K562 (cell line): ENCODE measurements at regions of chr5 and their contacts with region 1.

Region 1: GRCh38 chr5:132456296-132457001 is 34.1 kb downstream of the IRF1 start:
- DNase-seq: no peak
- ATAC-seq: no peak
- H3K4me3 ChIP-seq: no peak overlapping the region
- H3K27ac ChIP-seq: no peak overlapping the region
- H3K4me1 ChIP-seq: peaks cover 16 to 42% of the 10 kb centered on the region in 2 experiments
- H3K27me3 ChIP-seq: no peaks in the 10 kb centered on the region
- CTCF ChIP-seq: no peak
- EP300 ChIP-seq: no peak
- POLR2A ChIP-seq: no peak
- RAD21 ChIP-seq: no peak

Region 2: DNA sequence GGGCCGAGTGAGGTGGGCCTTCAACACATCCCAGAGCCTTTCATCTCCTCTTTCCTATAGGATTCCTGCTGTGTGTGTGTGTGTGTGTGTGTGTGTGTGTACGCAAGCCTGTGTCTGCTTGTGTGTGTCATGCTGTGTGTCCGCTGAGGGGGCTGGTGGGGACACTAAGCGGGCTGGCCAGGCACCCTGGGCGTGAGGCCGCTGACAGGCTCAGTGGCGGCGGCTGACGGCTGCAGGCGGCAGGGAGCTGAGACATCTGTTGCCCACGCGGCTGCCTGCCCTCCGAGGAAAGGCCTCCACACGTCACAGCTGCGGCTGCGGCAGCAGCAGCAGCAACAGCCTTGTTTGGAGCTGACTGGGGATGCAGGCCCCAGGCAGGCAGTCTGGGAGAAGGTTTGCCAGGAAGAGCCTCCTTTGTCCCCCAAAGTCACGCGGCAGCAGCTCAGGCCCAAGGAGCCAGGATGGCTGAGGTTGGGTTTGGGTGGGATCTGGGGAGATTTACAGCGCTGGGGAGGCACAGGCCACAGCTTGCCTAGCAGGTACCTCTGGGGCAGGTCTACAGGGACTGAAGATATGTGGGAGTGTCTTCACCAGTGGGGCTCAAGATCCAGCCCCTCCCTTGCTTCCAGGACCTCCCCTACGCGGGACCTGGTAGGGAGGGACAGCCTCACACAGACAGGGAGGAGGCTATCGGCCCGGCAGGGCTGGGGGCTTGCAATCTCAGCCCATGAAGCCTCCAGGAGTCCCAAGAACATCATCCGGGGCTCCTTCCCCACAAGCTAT is 197.2 kb before region 1 on chr5:
- CTCF ChIA-PET with region 1: no interaction called
- POLR2A ChIA-PET with region 1: no interaction called
- in situ Hi-C with region 1: no loop called
- intact Hi-C with region 1: no loop called
- DNase-seq: peak; percentile 54 to 69 (median 58)
- ATAC-seq: peak; percentile 58
- H3K4me3 ChIP-seq: peak overlapping the region; percentile 63
- H3K27ac ChIP-seq: peak overlapping the region; percentile 74; the same call in 2 of the 3 replicates
- H3K4me1 ChIP-seq: peaks cover 41 to 63% of the 10 kb centered on the region in 2 experiments
- H3K27me3 ChIP-seq: no peaks in the 10 kb centered on the region
- CTCF ChIP-seq: no peak
- EP300 ChIP-seq: no peak
- POLR2A ChIP-seq: no peak
- RAD21 ChIP-seq: no peak

Region 3: DNA sequence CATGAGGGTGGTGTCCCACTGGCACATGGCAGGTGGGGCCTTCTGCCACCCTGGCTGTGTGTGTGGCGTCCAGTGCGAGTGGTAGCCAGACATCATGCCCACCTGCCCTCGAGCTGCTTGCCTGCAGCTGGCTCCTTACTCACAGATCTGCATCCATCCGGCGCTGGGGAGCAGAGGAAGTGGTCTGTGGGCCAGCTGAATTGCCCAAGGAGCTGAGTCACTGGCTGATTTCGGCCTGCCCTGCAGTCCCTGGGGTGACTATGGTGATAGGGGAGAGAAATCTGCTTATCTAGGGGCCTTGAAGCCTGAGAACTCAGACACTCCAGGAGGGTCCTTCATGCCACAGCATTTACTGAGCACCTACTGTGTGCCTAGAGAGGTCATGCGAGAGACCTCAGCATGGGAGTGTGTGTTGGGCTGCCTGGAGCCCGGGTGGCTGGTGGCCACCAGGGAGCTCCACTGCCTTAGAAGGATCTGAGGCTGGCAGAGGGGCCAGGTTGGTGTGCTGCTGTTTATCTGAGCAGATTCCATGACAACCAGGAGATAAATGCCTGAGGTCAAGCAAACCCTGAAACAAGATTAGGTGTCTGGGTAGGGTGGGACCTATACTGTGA is 29.8 kb before region 1 on chr5:
- CTCF ChIA-PET with region 1: interaction called, 3 read pairs
- POLR2A ChIA-PET with region 1: interaction called, 16 read pairs
- in situ Hi-C with region 1: loop called (anchors 5 kb)
- intact Hi-C with region 1: loop called (anchors 2 kb)
- DNase-seq: peak; percentile 75 to 91 (median 84)
- ATAC-seq: peak; percentile 81
- H3K4me3 ChIP-seq: no peak overlapping the region
- H3K27ac ChIP-seq: peak overlapping the region; percentile 76
- H3K4me1 ChIP-seq: peaks cover 52 to 71% of the 10 kb centered on the region in 2 experiments
- H3K27me3 ChIP-seq: no peaks in the 10 kb centered on the region
- CTCF ChIP-seq: peak; percentile 57 to 66 (median 59)
- EP300 ChIP-seq: peak; percentile 83; the same call in 1 of the 2 replicates
- POLR2A ChIP-seq: peak; percentile 71
- RAD21 ChIP-seq: peak; percentile 60 to 66

Region 4: DNA sequence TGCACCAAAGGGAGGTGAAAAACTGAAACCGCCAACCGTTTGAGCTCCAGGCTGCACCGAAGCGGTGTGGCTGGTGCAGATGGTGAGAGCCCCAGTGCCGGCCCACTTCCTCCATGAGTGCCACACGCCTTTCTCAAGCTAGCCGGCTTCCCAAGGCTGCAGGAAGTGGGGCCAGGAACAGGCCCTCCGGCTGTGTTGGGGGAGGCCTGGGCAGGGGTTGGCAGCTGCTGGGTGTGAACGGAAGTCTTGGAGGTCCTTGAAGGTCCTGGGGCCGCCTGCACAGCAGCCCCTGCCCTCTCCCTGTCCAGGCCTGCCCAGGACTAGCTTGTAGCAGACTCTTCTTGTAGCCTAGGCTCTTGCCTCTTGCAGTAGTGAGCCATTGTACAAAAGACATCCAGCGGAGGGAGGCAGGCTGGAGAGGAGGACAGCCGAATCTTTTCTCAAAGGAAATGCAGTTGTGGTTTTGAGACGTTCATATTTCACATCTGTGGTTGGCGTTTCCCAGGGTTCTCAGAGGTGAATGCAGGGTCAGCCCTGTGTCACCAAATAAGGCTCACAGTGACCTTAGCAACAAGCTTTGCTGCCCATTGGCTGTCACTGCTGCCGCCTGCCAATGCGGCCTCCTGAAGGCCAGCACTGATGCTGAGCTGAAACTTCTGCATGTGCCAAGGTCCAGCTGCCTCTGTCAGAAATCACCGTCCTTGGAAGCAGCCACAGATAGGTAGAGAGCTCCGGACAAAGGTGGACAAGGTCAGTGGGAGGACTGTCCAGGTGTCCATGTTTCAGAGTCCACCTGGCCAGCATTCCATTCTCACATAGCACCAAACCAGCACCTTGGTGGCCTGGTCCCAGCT is 10.2 kb after region 1 on chr5:
- CTCF ChIA-PET with region 1: no interaction called
- POLR2A ChIA-PET with region 1: interaction called, 14 read pairs
- in situ Hi-C with region 1: no loop called
- intact Hi-C with region 1: no loop called
- DNase-seq: peak in 2 of 4 experiments; percentile 50 to 76
- ATAC-seq: peak; percentile 68
- H3K4me3 ChIP-seq: no peak overlapping the region
- H3K27ac ChIP-seq: peak overlapping the region; percentile 54; the same call in 1 of the 3 replicates
- H3K4me1 ChIP-seq: peaks cover 24 to 28% of the 10 kb centered on the region in 2 experiments
- H3K27me3 ChIP-seq: no peaks in the 10 kb centered on the region
- CTCF ChIP-seq: no peak
- EP300 ChIP-seq: 0 out of 2 replicates have a peak, but pooled peaks have one; percentile 22
- POLR2A ChIP-seq: no peak
- RAD21 ChIP-seq: peak in 1 of 2 experiments; percentile 34; a peak in 2 of 4 replicates

Region 5: GRCh38 chr5:132479111-132479951 is 22.9 kb after region 1 on chr5:
- CTCF ChIA-PET with region 1: no interaction called
- POLR2A ChIA-PET with region 1: interaction called, 25 read pairs
- in situ Hi-C with region 1: no loop called
- intact Hi-C with region 1: no loop called
- DNase-seq: no peak
- ATAC-seq: no peak
- H3K4me3 ChIP-seq: no peak overlapping the region
- H3K27ac ChIP-seq: no peak overlapping the region
- H3K4me1 ChIP-seq: peaks cover 0 to 13% of the 10 kb centered on the region in 2 experiments; a peak in 3 of 5 replicates
- H3K27me3 ChIP-seq: no peaks in the 10 kb centered on the region
- CTCF ChIP-seq: no peak
- EP300 ChIP-seq: no peak
- POLR2A ChIP-seq: no peak
- RAD21 ChIP-seq: no peak

Region 6: DNA sequence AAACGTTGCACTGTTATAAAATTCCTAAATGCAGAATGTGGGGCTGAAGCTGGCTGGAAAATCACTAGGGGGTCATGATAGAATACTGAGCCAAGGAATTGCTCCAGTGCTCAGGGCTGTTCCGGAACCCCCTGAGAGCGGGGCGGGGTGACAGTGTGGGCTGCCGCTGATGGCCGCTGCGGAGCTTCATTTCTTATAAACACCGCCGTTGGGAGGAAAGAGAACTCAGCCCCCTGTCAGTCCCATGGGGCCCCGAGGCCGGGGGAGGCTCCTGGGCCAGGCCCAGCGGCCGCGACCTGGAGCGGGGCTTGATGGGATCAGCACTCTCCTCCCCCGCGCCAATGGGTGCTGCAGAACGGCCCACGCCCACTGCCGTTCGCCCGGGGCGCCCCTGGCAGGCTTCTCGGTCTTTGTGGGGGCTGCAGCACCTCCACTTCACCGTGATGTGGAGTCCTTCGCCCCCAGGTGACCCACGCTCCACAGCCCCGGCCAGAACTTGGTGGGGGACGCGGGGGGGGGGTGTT is 39.3 kb after region 1 on chr5:
- CTCF ChIA-PET with region 1: no interaction called
- POLR2A ChIA-PET with region 1: interaction called, 15 read pairs
- in situ Hi-C with region 1: no loop called
- intact Hi-C with region 1: loop called (anchors 2 kb)
- DNase-seq: peak; percentile 90 to 95 (median 94)
- ATAC-seq: peak; percentile 84
- H3K4me3 ChIP-seq: peak overlapping the region; percentile 72
- H3K27ac ChIP-seq: peak overlapping the region; percentile 87
- H3K4me1 ChIP-seq: peaks cover 47 to 61% of the 10 kb centered on the region in 2 experiments
- H3K27me3 ChIP-seq: no peaks in the 10 kb centered on the region
- CTCF ChIP-seq: peak; percentile 33 to 40 (median 39); a peak in 5 of 6 replicates
- EP300 ChIP-seq: peak; percentile 60
- POLR2A ChIP-seq: peak; percentile 61
- RAD21 ChIP-seq: peak; percentile 43 to 48